BJ (cell line): ENCODE measurements at regions of chr1 and their contacts with region 1.

Region 1: DNA sequence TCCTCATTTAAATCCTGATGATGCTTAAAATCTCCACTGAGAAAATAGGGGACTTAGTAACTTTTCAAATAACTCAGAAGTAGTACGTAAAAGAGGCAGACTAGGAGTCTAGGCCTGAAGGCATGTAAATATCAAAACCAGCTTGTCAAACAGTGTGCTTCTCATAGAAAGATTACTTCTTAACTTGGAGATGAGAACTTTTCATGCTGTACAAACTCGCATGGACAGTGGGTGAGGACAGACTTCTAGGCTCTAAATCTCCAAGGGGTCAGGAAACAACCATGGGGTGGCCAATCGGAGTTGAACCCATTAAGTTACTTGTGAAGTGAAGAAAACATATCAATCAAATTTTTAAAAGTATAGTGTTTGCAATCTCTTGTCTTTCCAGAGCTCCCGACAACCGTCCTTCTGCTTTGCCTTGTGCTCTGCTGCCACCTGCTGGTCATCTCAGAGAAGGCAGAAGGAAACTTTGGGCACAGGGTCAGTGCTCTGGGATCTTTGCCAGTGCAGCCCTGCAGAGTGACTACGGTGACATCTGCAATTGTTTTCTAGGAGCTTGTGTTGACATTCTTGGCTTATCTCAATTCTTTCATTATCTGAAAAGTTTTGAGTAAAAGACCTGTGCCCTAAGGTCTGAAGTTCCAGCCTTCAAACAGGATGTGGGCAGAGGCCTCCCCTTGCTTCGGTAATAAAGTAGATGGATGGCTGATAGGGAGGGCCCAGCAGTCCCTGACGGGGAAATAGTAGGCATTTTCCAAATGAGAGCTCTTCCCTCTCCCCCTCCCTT is 105.1 kb upstream of the PDE4B start:
- DNase-seq: no peak
- H3K4me3 ChIP-seq: no peak overlapping the region
- H3K27me3 ChIP-seq: no peaks in the 10 kb centered on the region; the same call in 1 of the 2 replicates
- CTCF ChIP-seq: peak; percentile 91

Region 2: DNA sequence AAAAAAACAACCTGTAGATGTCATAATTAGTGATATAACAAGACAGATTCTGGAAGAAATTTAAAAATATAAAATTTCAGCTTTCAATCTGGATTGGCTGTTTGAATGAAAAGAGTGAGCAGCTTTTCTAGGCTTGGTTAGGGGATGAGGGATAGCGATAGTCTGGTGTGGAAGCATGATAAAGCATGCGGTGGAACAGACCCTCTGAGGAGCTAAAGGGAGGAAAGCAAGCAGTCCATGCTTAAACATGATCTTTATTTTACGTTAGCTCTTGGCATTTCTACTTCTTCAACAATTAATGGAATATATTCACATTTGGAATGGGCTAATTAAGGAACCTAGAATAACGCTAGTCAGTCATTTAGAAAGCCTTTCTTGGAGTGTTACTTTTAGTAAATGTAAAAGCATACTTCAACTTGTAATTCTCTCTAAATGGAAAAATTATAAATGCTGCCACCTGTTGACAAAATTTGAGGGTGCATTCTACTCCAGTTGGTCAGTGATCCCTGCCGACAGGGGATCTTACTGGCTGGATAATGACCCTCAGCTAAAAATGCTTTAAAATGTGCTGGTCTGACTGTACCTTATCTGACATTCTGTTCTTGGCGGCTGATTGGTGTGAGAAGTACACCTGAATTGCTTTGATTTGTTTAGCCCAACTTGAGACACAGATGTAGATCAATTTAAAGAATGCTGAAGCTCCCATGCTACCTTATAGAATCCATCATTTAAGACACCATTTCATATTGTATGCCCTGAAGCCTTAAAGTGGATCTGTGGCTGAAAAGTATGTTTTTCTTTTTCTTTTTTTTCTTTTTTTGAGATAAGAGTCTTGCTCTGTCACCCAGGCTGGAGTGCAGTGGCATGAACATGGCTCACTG is 478.4 kb before region 1 on chr1:
- CTCF ChIA-PET with region 1: interaction called, 17 read pairs
- POLR2A ChIA-PET with region 1: no interaction called
- DNase-seq: no peak
- H3K4me3 ChIP-seq: no peak overlapping the region
- H3K27me3 ChIP-seq: no peaks in the 10 kb centered on the region
- CTCF ChIP-seq: peak; percentile 67

Region 3: DNA sequence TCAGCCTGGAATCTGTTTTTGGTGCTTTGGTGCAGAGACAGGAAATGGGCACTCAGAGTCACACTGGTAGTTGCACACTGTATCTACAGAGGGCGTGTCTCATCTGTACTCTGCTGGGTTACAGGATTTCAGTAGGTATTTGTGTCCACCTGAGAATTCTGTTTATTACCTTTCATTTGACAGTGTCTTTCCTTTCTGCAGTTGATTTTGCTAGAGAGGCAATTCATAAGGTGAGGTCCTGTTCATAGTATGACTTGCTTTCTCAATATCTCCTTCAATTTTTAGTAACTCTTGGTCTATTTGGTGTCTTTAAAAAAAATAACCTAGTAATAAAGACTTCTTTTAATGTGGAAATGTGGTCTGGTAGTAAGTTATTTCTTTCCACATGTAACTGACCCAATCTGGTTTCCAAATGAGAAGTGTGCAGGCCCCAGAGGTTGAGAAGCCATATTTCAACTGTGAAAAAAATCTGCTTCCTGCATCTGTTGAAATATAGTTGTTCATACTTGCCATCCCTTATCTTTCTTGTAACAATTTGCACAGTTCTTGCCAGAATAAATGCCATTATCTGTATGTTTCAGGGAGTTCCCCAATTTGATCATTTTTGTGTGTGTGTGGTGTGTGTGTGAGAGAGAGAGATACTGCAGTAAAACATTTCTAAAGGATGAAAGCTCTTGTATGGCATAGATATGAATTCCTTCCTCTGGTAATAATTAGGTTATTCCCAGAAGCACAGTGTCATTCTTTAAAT is 456.7 kb before region 1 on chr1:
- CTCF ChIA-PET with region 1: interaction called, 23 read pairs
- POLR2A ChIA-PET with region 1: no interaction called
- DNase-seq: no peak
- H3K4me3 ChIP-seq: no peak overlapping the region
- H3K27me3 ChIP-seq: no peaks in the 10 kb centered on the region
- CTCF ChIP-seq: no peak

Region 4: DNA sequence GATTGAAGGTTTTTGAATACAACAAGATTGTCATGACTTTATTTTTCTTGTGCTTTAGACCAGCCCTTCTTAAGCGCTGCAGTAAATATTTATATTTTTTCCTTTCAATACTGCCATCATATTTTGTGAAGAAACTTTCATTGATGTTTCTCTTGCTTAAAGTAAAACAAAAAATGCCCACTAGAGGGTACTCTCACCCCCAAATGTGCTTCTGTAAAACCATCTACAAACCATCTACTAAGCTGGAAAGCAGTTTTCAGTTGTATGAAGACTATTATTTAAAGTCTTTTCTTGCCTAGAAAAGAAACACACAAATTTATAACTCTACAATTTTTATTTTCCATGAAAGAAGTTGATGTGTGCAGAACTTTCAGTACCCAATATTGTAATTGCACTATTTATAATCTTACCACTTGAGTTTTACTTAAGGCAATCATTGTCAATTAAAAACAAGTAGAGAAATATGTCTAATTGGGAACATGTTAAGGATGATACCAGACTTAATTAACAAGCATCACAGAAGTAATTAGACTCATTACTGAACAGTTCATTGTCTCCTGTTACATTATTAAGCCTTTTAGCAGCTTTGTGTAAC is 256.4 kb before region 1 on chr1:
- CTCF ChIA-PET with region 1: interaction called, 22 read pairs
- POLR2A ChIA-PET with region 1: no interaction called
- DNase-seq: no peak
- H3K4me3 ChIP-seq: no peak overlapping the region
- H3K27me3 ChIP-seq: no peaks in the 10 kb centered on the region
- CTCF ChIP-seq: peak; percentile 61